ENCODE measurements at regions of chr6 and their contacts with region 1.

Region 1: DNA sequence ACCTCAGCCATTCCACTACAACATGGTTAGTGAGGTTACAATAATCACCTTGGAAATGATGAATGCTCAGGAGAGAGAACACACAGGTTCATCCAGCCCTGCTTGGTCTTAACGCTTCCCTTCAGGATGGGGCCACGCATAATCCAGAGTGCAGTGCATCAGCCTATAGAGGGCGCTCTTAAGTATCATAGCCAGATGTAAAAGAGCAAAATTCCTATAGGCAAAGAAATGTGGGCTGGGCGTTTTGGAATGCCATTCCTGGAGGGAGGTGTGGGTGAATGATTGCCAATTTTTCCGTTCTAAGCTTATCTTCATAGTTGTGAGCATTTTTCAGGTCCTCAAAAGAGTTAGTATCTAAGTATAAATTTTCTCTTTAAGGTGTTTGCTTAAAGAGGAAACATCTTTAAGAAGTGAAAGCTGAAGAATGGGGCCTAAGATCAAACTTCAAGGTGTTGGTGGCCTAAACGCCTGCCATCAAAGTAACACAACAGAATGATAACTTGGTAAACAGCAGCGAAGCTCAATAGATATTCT is 1.8 kb downstream of the RIPOR2 start:
- DNase-seq: peak; percentile 69
- ATAC-seq: peak; percentile 25
- H3K4me3 Mint-ChIP-seq: peak overlapping the region; percentile 94
- H3K27ac Mint-ChIP-seq: peak overlapping the region; percentile 89
- H3K4me1 Mint-ChIP-seq: peaks cover 66% of the 10 kb centered on the region
- H3K27me3 Mint-ChIP-seq: no peaks in the 10 kb centered on the region

Region 2: DNA sequence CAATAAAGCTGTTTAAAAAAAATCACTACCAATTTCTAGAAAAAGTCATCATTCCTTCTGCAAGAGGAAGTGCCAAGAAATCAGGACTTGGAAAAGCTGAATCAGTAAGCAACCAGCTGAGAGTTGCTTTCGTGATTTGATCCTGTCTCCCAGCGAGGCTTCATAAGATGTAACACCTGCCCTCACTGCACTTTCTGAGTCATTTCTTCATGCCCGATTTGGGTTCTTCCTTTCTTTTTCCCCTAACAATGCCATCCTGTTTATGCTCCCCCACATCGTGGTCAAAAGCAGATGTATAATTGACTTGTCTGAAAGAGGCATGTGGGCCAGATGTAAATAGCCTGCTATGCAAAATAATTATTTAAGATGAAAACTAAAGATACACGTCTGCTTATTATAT is 50.3 kb before region 1 on chr6:
- CTCF ChIA-PET with region 1: interaction called, 26 read pairs
- POLR2A ChIA-PET with region 1: interaction called, 3 read pairs
- DNase-seq: no peak
- ATAC-seq: peak; percentile 74
- H3K4me3 Mint-ChIP-seq: peak overlapping the region; percentile 10
- H3K27ac Mint-ChIP-seq: peak overlapping the region; percentile 36
- H3K4me1 Mint-ChIP-seq: peaks cover 64% of the 10 kb centered on the region
- H3K27me3 Mint-ChIP-seq: no peaks in the 10 kb centered on the region

Region 3: DNA sequence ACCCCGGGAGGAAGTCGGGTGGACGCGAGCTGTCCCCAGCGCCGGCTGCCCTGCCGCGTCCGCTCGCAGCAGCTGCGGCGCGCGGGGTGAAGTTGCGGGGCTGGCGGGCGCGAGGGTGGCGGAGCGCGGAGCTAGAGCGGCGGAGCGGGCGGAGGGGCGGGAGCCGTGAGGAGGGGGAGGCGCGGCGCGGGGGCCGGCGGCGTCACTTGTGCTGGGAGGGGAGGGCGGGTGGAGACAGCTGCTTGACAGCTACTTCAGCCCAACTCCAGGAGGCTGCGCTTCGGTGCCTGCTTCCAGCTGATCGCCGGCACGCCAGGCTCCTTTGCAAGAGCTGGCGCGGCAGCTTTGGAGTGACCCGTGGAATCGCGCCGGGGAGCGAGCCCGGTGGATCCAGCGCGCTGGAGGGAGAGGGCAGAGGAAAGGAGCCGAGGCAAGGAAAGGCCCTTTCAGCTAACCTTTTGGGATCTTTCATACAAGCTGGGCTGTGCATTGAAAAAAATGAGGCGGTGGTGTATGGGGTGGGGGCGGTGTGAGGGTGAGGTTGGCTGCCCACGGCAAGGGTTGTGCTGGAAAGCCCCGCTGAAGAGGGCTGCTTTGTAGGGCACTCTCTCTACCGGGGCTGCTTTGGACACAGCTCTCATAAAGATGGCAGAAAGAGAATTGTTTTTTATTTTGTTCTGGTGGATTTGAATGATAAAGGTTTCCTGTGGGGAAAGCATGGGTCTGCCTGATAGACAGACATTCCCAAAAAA is 22.8 kb before region 1 on chr6:
- CTCF ChIA-PET with region 1: interaction called, 198 read pairs
- POLR2A ChIA-PET with region 1: interaction called, 22 read pairs
- DNase-seq: no peak
- ATAC-seq: peak; percentile 42
- H3K4me3 Mint-ChIP-seq: peak overlapping the region; percentile 81
- H3K27ac Mint-ChIP-seq: peak overlapping the region; percentile 87
- H3K4me1 Mint-ChIP-seq: peaks cover 94% of the 10 kb centered on the region
- H3K27me3 Mint-ChIP-seq: no peaks in the 10 kb centered on the region

Region 4: GRCh38 chr6:24960991-24961475 is 27.1 kb after region 1 on chr6:
- CTCF ChIA-PET with region 1: interaction called, 26 read pairs
- POLR2A ChIA-PET with region 1: interaction called, 6 read pairs
- DNase-seq: no peak
- ATAC-seq: no peak
- H3K4me3 Mint-ChIP-seq: no peak overlapping the region
- H3K27ac Mint-ChIP-seq: peak overlapping the region; percentile 69
- H3K4me1 Mint-ChIP-seq: peaks cover 53% of the 10 kb centered on the region
- H3K27me3 Mint-ChIP-seq: no peaks in the 10 kb centered on the region

Region 5: DNA sequence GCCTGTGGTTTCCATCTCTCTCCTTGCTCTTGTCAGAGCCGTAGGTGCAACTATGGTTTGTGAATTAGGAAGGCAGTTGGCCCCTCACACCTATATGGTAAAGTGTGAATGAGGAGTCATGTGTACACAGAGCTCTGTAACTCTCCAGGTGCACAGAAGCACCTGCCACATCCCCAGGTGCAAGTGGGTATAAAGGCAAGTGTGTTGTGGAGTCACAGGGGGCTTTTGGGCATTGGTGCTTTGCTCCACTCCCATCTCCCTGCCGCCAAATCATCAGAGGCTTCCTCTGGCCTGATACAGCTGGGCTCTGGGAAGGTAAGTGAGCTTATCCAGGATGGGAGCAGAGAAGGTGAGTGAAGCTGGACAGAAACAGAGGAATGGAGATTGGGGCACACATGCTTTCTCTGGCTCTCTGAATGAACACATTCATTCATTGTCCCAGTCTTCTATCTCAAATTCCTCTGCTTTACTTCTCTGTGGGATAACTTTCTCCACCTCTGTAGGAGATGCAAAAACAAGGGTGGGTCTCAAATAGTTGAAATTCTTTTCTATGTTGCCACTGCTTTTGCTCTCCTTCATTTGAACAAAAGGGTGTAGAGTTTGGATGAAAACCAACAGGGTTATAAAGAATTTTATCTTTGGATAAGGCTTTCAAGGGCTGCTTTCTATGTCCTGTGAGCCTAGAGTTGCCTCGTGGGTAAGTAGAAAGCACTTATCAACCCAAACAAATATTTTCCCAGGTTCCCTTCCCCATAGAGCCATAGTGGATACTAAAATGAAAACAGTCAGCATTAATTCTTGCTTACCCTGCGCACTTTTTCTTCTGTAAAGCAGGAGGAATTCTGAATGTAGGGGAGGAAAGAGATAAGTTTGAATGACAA is 46.8 kb after region 1 on chr6:
- CTCF ChIA-PET with region 1: interaction called, 433 read pairs
- POLR2A ChIA-PET with region 1: interaction called, 3 read pairs
- DNase-seq: no peak
- ATAC-seq: no peak
- H3K4me3 Mint-ChIP-seq: no peak overlapping the region
- H3K27ac Mint-ChIP-seq: no peak overlapping the region
- H3K4me1 Mint-ChIP-seq: peaks cover 7% of the 10 kb centered on the region
- H3K27me3 Mint-ChIP-seq: no peaks in the 10 kb centered on the region

Region 6: DNA sequence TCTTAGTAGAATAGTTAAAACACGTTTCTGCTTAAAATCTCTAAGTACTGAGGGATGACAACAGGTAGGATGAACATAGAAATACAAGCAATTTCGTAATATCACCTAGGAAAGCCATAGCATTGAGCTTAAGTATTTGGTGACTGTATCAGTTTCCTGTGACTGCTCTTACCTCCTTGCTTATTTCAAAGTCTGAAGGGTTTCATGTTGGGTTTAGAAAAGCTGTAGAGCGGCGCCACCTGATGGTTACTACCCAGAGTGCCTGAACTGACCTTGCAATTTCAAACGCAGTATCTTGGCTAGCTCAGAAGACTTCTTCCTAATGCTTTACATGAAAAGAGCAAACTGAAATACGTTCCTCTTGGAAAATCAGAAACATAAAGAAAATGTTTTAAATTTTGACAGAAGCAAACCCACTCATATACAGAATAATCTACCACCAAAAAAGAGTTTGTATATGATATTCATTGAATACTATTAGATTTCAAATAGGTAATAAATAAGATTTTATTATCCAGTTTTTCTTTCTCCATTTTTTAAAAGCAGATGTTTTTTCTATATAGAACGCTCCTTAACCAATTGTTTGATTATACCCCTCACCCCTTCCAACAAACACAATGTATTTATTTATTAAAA is 84.1 kb after region 1 on chr6:
- CTCF ChIA-PET with region 1: interaction called, 109 read pairs
- POLR2A ChIA-PET with region 1: no interaction called
- DNase-seq: peak; percentile 89
- ATAC-seq: peak; percentile 86
- H3K4me3 Mint-ChIP-seq: no peak overlapping the region
- H3K27ac Mint-ChIP-seq: peak overlapping the region; percentile 62
- H3K4me1 Mint-ChIP-seq: peaks cover 40% of the 10 kb centered on the region
- H3K27me3 Mint-ChIP-seq: no peaks in the 10 kb centered on the region

Region 7: GRCh38 chr6:25053875-25054371 is 120.0 kb after region 1 on chr6:
- CTCF ChIA-PET with region 1: interaction called, 18 read pairs
- POLR2A ChIA-PET with region 1: interaction called, 4 read pairs
- DNase-seq: no peak
- ATAC-seq: no peak
- H3K4me3 Mint-ChIP-seq: no peak overlapping the region
- H3K27ac Mint-ChIP-seq: peak overlapping the region; percentile 44
- H3K4me1 Mint-ChIP-seq: peaks cover 89% of the 10 kb centered on the region
- H3K27me3 Mint-ChIP-seq: no peaks in the 10 kb centered on the region

Measured in activated CD8-positive, alpha-beta T cell treated with anti-CD3 and anti-CD28 coated beads, Interleukin-2, amount 10 ng/mL, durations not matched to agents 7 days and 5 days (primary cell).